Naive thymus-derived CD4-positive, alpha-beta T cell (primary cell): ENCODE measurements at regions of chr19 and their contacts with region 1.

Region 1: DNA sequence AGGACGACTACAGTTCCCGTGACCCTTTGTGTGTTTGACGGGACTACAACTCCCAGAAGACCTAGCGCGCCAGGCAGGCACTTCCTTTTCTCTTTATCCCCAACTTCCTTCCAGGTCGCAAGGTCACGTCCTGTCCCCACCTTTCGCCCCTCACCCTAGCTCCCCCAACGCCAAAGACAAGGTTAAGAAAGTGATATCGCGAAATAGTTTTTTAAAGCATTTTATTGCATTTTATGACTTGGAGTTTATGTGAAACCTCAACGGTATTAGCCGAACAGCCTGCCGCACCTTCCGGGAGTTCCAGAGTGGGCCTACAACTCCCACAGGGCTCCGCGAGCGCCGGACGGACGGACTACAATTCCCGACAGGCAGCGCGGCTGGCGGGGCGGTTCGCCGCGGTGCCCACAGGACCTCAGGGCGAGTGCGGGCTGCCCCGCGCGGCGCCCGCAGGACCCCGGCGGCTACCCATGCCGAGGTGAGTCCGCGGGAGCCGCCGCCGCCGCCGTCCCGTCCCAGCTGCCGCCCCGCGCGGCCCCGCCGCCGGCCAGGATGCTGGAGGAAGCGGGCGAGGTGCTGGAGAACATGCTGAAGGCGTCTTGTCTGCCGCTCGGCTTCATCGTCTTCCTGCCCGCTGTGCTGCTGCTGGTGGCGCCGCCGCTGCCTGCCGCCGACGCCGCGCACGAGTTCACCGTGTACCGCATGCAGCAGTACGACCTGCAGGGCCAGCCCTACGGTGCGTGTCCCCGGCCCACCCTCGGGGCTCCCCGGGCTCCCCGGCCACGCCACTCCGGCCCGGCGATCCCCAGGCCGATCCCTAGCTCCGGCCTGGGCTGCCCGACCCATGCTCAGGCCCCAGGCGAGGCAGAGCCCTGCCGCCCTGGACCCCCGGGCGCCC is at the start of gene NCLN:
- DNase-seq: peak; percentile 92 to 98 (median 95)
- ATAC-seq: peak; percentile 94
- H3K4me3 ChIP-seq: peak within 1 kb of the TSS; percentile 71
- H3K4me3 Mint-ChIP-seq: peak within 1 kb of the TSS; percentile 86 to 99 (median 94)
- H3K27ac ChIP-seq: peak within 1 kb of the TSS; percentile 74
- H3K27ac Mint-ChIP-seq: peak within 1 kb of the TSS; percentile 89 to 99 (median 91)
- H3K4me1 ChIP-seq: peaks cover 53 to 63% of the 10 kb centered on the region in 2 donors
- H3K4me1 Mint-ChIP-seq: peaks cover 43 to 66% (median 54%) of the 10 kb centered on the region in 7 donors
- H3K27me3 ChIP-seq: no peaks in the 10 kb centered on the region
- H3K27me3 Mint-ChIP-seq: peaks cover 0 to 2% (median 0%) of the 10 kb centered on the region in 5 donors
- total RNA-seq, gene NCLN: 45.4 to 64.7 (median 53.7) TPM

Region 2: DNA sequence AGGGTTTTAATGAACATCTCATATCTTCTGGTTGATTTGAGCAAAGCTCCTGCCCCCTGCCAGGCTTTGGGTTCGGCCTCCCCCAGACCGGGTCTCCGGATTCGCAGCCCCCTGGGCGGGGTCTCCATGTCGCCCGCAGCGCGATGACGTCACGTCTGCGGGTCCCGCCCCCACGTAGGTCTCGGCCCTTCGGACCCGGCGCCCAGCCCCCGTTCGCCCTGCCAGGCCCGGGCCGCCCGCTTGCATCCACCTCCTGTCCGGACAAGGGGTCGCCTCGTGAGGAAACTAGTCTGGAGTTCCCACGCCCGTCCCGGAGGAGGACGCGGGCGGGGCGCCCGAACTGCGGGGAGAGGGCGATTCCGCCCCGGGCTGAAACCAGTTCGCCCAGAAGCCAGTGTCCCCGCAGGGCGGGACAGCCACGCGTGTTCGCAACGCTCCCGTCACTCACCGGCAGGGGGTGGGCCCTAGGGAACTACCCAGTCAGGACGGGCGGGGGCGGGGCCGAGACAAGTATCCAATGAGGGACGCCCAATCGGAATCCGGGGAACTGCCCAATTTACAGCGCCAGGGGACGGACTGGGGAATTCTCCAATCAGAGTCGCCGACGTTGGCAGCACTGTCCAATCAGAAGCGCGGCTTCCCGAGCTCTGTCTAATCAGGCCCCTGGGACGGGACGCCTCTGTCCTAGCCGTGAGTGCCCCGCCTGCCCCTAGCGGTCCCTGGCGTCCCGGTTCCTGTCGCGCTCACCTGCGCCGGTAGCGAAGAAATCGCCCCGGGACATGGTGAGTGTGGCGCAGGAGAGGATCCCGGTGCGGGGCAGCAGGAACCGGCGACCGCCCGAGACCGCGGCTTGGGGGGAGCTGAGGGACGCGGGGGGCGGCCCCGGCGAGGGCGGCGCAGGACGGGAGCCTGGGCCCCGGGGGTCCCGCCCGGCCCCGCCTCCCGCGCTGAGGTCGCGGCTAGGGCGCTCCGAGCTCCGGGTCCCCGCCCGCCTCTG is 344.6 kb before region 1 on chr19 and contains the start of gene ZNF555:
- CTCF ChIA-PET with region 1: no interaction called
- POLR2A ChIA-PET with region 1: no interaction called
- intact Hi-C with region 1: loop called in 1 of 2 experiments (anchors 1 kb)
- DNase-seq: peak; percentile 77 to 99 (median 97)
- ATAC-seq: peak; percentile 98
- H3K4me3 ChIP-seq: peak within 1 kb of the TSS; percentile 94
- H3K4me3 Mint-ChIP-seq: peak within 1 kb of the TSS; percentile 85 to 96 (median 92)
- H3K27ac ChIP-seq: peak within 1 kb of the TSS; percentile 75
- H3K27ac Mint-ChIP-seq: peak within 1 kb of the TSS; percentile 70 to 90 (median 82)
- H3K4me1 ChIP-seq: peaks cover 3 to 13% of the 10 kb centered on the region in 2 donors
- H3K4me1 Mint-ChIP-seq: peaks cover 5 to 33% (median 18%) of the 10 kb centered on the region in 7 donors
- H3K27me3 ChIP-seq: no peaks in the 10 kb centered on the region
- H3K27me3 Mint-ChIP-seq: peaks cover 0 to 7% (median 0%) of the 10 kb centered on the region in 5 donors
- total RNA-seq, gene ZNF555: 1.2 to 10.0 (median 2.7) TPM

Region 3: DNA sequence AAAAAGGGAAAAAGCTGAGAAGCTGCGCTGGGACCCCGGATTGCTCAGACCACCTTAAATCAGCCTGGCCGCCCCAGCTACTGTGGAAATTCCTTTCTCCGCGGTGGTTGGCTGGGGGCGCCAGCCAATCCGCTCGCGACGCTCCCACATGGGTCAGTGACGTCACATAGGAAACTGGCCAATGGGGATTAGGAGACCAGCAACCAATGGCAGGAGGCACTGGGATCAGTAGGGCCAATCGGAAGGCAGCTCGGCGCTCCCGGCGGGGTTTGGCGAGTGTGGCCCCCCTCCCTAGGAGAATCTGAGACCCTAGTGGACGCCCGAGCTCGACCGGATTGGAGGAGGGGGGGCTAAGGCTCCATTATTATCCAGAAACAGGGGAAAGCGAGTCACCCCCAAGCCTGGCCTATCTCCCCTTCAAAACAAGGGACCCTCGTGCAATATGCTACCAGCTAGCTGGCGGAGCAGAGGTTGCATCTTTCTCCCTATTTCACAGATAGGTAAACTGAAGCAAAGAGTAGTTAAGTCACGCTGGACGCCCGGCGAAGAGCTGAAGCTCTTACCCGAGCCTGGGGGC is 150.1 kb before region 1 on chr19:
- CTCF ChIA-PET with region 1: no interaction called
- POLR2A ChIA-PET with region 1: interaction called, 7 read pairs
- intact Hi-C with region 1: loop called (anchors 1 to 5 kb)
- DNase-seq: peak; percentile 77 to 97 (median 95)
- ATAC-seq: peak; percentile 95
- H3K4me3 ChIP-seq: peak overlapping the region; percentile 95
- H3K4me3 Mint-ChIP-seq: peak overlapping the region; percentile 88 to 97 (median 94)
- H3K27ac ChIP-seq: peak overlapping the region; percentile 76
- H3K27ac Mint-ChIP-seq: peak overlapping the region; percentile 92 to 99 (median 98)
- H3K4me1 ChIP-seq: peaks cover 11 to 16% of the 10 kb centered on the region in 2 donors
- H3K4me1 Mint-ChIP-seq: peaks cover 21 to 44% (median 31%) of the 10 kb centered on the region in 7 donors
- H3K27me3 ChIP-seq: no peaks in the 10 kb centered on the region
- H3K27me3 Mint-ChIP-seq: peaks cover 0 to 41% (median 0%) of the 10 kb centered on the region in 5 donors

Region 4: DNA sequence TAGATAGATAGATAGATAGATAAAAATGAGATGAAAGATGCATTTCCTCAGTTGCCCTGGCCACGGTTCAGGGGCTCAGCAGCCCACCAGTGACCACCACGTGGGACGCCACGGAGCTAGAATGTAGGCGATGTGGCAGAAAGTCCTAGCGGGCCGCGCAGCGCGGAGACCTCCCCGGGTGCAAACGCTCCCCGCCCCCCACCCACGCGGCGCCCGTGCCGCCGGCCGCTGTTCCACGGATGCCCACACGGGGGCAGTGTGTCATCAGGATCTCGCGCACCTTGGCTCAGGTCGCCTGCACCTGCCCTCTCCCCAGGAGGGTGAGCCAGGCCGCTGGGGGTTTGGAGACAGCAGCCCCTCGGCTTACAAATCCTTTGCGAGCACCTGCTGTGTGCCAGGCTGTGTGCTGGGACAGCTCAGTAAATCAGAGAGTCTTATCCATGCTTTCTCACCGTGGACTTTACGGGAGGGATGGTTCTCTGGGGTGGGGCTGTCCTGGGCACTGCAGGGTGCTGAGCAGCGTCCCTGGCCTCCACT is 109.8 kb before region 1 on chr19:
- CTCF ChIA-PET with region 1: no interaction called
- POLR2A ChIA-PET with region 1: no interaction called
- intact Hi-C with region 1: no loop called
- DNase-seq: peak; percentile 63 to 85 (median 71)
- ATAC-seq: peak; percentile 99
- H3K4me3 ChIP-seq: no peak overlapping the region
- H3K4me3 Mint-ChIP-seq: peak overlapping the region in 4 of 10 donors; percentile 44 to 68 (median 50)
- H3K27ac ChIP-seq: no peak overlapping the region
- H3K27ac Mint-ChIP-seq: no peak overlapping the region
- H3K4me1 ChIP-seq: peaks cover 0 to 9% of the 10 kb centered on the region in 2 donors
- H3K4me1 Mint-ChIP-seq: peaks cover 0 to 10% (median 4%) of the 10 kb centered on the region in 7 donors
- H3K27me3 ChIP-seq: no peaks in the 10 kb centered on the region
- H3K27me3 Mint-ChIP-seq: peaks cover 0 to 6% (median 0%) of the 10 kb centered on the region in 5 donors

Region 5: GRCh38 chr19:3275583-3276340 is 90.0 kb after region 1 on chr19:
- CTCF ChIA-PET with region 1: no interaction called
- POLR2A ChIA-PET with region 1: no interaction called
- intact Hi-C with region 1: loop called in 1 of 2 experiments (anchors 1 kb)
- DNase-seq: peak; percentile 78 to 96 (median 91)
- ATAC-seq: peak; percentile 89
- H3K4me3 ChIP-seq: peak overlapping the region; percentile 74
- H3K4me3 Mint-ChIP-seq: peak overlapping the region; percentile 82 to 92 (median 86)
- H3K27ac ChIP-seq: peak overlapping the region; percentile 62
- H3K27ac Mint-ChIP-seq: peak overlapping the region in 8 of 9 donors; percentile 32 to 89 (median 84)
- H3K4me1 ChIP-seq: peaks cover 8 to 16% of the 10 kb centered on the region in 2 donors
- H3K4me1 Mint-ChIP-seq: peaks cover 8 to 22% (median 14%) of the 10 kb centered on the region in 7 donors
- H3K27me3 ChIP-seq: no peaks in the 10 kb centered on the region
- H3K27me3 Mint-ChIP-seq: peaks cover 7 to 16% (median 12%) of the 10 kb centered on the region in 5 donors

Region 6: DNA sequence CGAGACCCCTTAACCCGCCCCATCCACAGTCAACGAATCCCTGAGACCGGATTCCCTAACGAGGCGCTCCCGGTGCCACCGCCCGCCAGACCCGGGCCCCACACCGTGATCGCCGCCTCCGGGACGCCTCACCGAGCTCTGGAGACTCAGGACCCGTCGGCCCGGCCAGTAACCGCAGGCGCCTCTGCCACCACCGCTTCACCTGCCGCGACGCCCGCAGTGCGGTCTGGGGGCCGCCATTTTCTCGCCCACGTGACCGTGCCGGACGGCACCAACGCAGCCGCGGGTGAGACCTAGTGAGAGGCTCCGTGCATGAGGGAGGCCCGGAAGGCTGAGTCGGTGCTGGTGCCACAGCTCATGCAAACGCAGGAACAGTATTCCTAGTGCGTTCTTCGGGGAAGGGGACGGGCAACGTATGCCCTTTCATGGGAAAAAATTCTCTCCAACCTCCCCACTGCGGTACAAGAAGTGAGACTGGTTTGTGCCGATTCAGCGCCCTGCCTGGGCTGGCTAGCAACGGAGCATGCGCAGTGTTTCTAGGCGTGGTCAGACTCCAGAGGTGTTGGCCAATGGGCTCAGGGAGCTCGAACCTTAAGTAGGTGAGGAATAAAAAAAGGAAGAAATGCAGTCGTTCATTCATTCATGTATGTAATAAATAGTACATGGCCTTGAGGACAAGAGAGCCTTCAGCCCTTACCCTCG is 314.9 kb after region 1 on chr19 and contains the start of gene DOHH:
- CTCF ChIA-PET with region 1: no interaction called
- POLR2A ChIA-PET with region 1: no interaction called
- intact Hi-C with region 1: loop called in 1 of 2 experiments (anchors 1 kb)
- DNase-seq: peak; percentile 81 to 97 (median 94)
- ATAC-seq: peak; percentile 94
- H3K4me3 ChIP-seq: peak within 1 kb of the TSS; percentile 72
- H3K4me3 Mint-ChIP-seq: peak within 1 kb of the TSS; percentile 81 to 96 (median 93)
- H3K27ac ChIP-seq: peak within 1 kb of the TSS; percentile 82
- H3K27ac Mint-ChIP-seq: peak within 1 kb of the TSS; percentile 91 to 98 (median 96)
- H3K4me1 ChIP-seq: peaks cover 12 to 25% of the 10 kb centered on the region in 2 donors
- H3K4me1 Mint-ChIP-seq: peaks cover 13 to 41% (median 31%) of the 10 kb centered on the region in 7 donors
- H3K27me3 ChIP-seq: no peaks in the 10 kb centered on the region
- H3K27me3 Mint-ChIP-seq: peaks cover 0 to 5% (median 0%) of the 10 kb centered on the region in 5 donors
- total RNA-seq, gene DOHH: 4.4 to 16.4 (median 8.0) TPM